HCT116 (cell line): ENCODE measurements at regions of chr5 and their contacts with region 1.

Region 1: GRCh38 chr5:71969444-71969843 is 137.8 kb upstream of the MAP1B start:
- DNase-seq: no peak
- ATAC-seq: no peak
- H3K4me3 ChIP-seq: no peak overlapping the region
- H3K27ac ChIP-seq: no peak overlapping the region
- H3K4me1 ChIP-seq: no peaks in the 10 kb centered on the region
- H3K27me3 ChIP-seq: no peaks in the 10 kb centered on the region
- CTCF ChIP-seq: no peak
- POLR2A ChIP-seq: no peak
- RAD21 ChIP-seq: no peak

Region 2: DNA sequence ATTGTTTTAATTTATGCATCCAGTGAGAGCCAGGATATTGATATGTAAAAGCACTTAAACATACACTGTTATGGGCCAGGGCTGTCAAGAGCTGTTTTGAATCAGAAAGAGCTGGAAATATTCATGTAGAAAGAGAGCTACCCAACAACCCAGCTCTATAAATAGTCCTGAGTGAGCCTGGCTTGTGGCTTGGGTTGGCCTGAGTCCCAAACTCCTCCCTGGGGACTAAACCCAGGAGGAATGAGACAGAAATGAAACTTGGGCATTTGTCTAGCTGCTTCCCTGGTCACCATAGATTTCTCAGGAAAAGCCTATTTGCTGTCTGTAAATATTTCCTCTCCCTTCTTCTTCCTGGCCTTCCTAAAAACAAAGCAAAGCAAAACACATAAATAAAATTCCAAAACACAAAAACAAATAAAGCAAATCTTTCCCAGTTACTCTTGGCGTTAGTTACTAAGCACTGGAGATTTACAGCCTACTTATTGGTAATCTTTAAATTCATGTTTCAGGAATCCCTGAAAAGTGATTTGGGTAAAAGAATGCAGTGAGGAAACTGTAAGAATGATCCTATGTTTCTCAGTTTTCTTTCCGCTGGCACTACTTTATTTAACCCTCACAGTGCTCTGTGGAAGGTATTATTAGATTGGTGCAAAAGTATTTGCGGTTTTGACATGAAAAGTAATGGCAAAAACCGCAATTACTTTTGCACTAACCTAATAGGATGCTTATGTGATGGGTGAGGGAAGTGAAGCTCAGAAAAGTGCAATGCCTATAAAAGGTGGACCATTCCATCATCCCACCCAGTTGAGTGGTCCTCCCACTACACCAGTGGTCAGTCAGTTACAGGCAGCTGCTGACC is 138.5 kb before region 1 on chr5:
- CTCF ChIA-PET with region 1: no interaction called
- POLR2A ChIA-PET with region 1: no interaction called
- RAD21 ChIA-PET with region 1: no interaction called
- intact Hi-C with region 1: no loop called
- DNase-seq: no peak
- ATAC-seq: no peak
- H3K4me3 ChIP-seq: no peak overlapping the region
- H3K27ac ChIP-seq: no peak overlapping the region
- H3K4me1 ChIP-seq: peaks cover 0 to 12% of the 10 kb centered on the region in 2 experiments; a peak in 2 of 4 replicates
- H3K27me3 ChIP-seq: no peaks in the 10 kb centered on the region
- CTCF ChIP-seq: no peak
- POLR2A ChIP-seq: no peak
- RAD21 ChIP-seq: no peak

Region 3: GRCh38 chr5:71873191-71873591 is 96.3 kb before region 1 on chr5:
- CTCF ChIA-PET with region 1: no interaction called
- POLR2A ChIA-PET with region 1: no interaction called
- RAD21 ChIA-PET with region 1: no interaction called
- intact Hi-C with region 1: no loop called
- DNase-seq: no peak
- ATAC-seq: no peak
- H3K4me3 ChIP-seq: no peak overlapping the region
- H3K27ac ChIP-seq: no peak overlapping the region
- H3K4me1 ChIP-seq: no peaks in the 10 kb centered on the region
- H3K27me3 ChIP-seq: no peaks in the 10 kb centered on the region
- CTCF ChIP-seq: no peak
- POLR2A ChIP-seq: no peak
- RAD21 ChIP-seq: no peak

Region 4: GRCh38 chr5:71982717-71983395 is 13.4 kb after region 1 on chr5:
- CTCF ChIA-PET with region 1: no interaction called
- POLR2A ChIA-PET with region 1: no interaction called
- RAD21 ChIA-PET with region 1: no interaction called
- intact Hi-C with region 1: loop called (anchors 1 kb)
- DNase-seq: no peak
- ATAC-seq: no peak
- H3K4me3 ChIP-seq: no peak overlapping the region
- H3K27ac ChIP-seq: no peak overlapping the region
- H3K4me1 ChIP-seq: no peaks in the 10 kb centered on the region
- H3K27me3 ChIP-seq: no peaks in the 10 kb centered on the region
- CTCF ChIP-seq: no peak
- POLR2A ChIP-seq: no peak
- RAD21 ChIP-seq: no peak